SK-N-SH (cell line): ENCODE measurements at regions of chr1 and their contacts with region 1.

Region 1: DNA sequence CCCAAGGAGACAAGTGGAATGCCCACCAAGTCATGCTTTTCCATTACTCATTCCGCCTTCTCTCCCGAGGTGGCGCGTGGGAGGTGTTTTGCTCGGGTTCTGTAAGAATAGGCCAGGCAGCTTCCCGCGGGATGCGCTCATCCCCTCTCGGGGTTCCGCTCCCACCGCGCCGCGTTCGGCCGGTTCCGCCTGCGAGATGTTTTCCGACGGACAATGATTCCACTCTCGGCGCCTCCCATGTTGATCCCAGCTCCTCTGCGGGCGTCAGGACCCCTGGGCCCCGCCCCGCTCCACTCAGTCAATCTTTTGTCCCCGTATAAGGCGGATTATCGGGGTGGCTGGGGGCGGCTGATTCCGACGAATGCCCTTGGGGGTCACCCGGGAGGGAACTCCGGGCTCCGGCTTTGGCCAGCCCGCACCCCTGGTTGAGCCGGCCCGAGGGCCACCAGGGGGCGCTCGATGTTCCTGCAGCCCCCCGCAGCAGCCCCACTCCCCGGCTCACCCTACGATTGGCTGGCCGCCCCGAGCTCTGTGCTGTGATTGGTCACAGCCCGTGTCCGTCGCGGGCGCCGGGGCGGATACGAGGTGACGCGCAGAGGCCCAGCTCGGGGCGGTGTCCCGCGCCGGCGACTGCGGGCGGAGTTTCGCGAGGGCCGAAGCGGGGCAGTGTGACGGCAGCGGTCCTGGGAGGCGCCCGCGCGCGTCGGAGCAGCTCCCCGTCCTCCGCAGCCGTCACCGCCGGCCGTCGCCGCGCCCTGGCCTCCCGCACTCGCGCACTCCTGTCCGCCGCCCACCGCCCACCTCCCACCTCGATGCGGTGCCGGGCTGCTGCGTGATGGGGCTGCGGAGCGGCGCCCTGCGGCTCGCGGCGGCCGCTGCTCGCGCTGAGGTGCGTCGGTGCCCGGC is at the start of gene KIF1B:
- DNase-seq: peak; percentile 100
- H3K4me3 ChIP-seq: peak within 1 kb of the TSS; percentile 85 to 97
- H3K27ac ChIP-seq: peak within 1 kb of the TSS; percentile 91 to 97
- H3K4me1 ChIP-seq: peaks cover 8 to 9% of the 10 kb centered on the region in 2 experiments; a peak in 2 of 4 replicates
- H3K27me3 ChIP-seq: no peaks in the 10 kb centered on the region
- CTCF ChIP-seq: peak; percentile 95
- EP300 ChIP-seq: no peak
- RAD21 ChIP-seq: peak; percentile 44
- polyA plus RNA-seq, gene KIF1B: 6.8 and 8.8 TPM in 2 replicates

Region 2: GRCh38 chr1:9211291-9211811 is 998.8 kb before region 1 on chr1:
- CTCF ChIA-PET with region 1: no interaction called
- POLR2A ChIA-PET with region 1: no interaction called
- DNase-seq: no peak
- H3K4me3 ChIP-seq: no peak overlapping the region
- H3K27ac ChIP-seq: no peak overlapping the region
- H3K4me1 ChIP-seq: no peaks in the 10 kb centered on the region
- H3K27me3 ChIP-seq: no peaks in the 10 kb centered on the region
- CTCF ChIP-seq: no peak
- EP300 ChIP-seq: no peak
- RAD21 ChIP-seq: no peak

Region 3: DNA sequence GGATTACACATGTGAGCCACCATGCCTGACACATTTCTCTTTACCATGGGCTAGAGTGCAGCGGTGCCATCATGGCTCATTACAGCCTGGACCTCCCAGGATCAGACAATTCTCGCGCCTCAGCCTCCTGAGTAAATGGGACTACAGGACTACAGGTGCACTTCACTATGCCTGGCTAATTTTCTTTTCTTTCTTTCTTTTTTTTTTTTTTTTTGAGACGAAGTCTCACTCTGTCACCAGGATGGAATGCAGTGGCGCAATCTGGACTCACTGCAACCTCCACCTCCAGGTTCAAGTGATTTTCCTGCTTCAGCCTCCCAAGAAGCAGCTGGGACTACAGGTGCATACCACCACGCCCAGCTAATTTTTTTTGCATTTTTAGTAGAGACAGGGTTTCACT is 14.6 kb before region 1 on chr1:
- CTCF ChIA-PET with region 1: interaction called, 30 read pairs
- POLR2A ChIA-PET with region 1: no interaction called
- DNase-seq: no peak
- H3K4me3 ChIP-seq: no peak overlapping the region
- H3K27ac ChIP-seq: no peak overlapping the region
- H3K4me1 ChIP-seq: peaks cover 0 to 2% of the 10 kb centered on the region in 2 experiments; a peak in 1 of 4 replicates
- H3K27me3 ChIP-seq: no peaks in the 10 kb centered on the region
- CTCF ChIP-seq: no peak
- EP300 ChIP-seq: no peak
- RAD21 ChIP-seq: no peak

Region 4: DNA sequence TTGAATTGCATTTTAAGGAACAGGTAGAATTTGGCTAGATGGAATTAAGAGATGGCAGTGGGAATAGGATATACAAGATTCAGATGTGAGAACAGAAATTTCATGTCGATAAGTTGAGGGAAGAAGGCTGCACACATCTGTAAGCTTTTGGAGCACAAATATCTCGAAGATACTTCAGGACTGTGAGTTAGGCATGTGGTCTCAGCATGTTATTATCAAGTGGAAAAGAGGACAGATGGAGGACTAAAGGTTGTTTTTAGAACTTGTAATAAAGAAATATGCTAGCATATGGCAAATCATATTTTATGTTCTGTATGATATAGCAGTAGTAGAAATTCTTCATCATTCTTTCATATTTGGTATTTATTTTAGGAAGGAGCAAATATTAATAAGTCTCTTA is 61.7 kb after region 1 on chr1:
- CTCF ChIA-PET with region 1: interaction called, 11 read pairs
- POLR2A ChIA-PET with region 1: no interaction called
- DNase-seq: no peak
- H3K4me3 ChIP-seq: no peak overlapping the region
- H3K27ac ChIP-seq: no peak overlapping the region
- H3K4me1 ChIP-seq: no peaks in the 10 kb centered on the region
- H3K27me3 ChIP-seq: no peaks in the 10 kb centered on the region
- CTCF ChIP-seq: no peak
- EP300 ChIP-seq: no peak
- RAD21 ChIP-seq: no peak

Region 5: DNA sequence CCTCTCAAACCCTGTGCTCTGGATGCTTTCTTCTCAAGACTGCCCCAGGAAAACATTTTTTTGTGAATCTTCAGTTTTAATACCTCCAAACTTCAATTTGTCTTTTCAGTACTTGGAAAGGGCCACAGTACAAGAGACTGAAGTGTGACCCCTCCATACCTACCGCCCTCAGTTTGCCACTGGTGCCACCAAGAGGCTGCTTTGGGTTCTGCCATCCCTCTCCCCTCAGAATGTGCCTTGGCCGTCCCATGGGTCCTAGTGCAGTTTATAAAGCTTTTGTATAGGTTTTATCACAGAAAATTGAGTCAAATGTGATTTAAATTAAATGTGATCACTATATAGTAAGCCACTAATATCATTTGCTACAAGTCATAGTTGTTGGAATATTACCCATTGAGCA is 127.9 kb after region 1 on chr1:
- CTCF ChIA-PET with region 1: interaction called, 52 read pairs
- POLR2A ChIA-PET with region 1: interaction called, 12 read pairs
- DNase-seq: peak; percentile 71
- H3K4me3 ChIP-seq: no peak overlapping the region
- H3K27ac ChIP-seq: no peak overlapping the region
- H3K4me1 ChIP-seq: peaks cover 0 to 8% of the 10 kb centered on the region in 2 experiments; a peak in 2 of 4 replicates
- H3K27me3 ChIP-seq: no peaks in the 10 kb centered on the region
- CTCF ChIP-seq: peak; percentile 84
- EP300 ChIP-seq: no peak
- RAD21 ChIP-seq: peak; percentile 85